AG04449 (cell line): ENCODE measurements at regions of chr10 and their contacts with region 1.

Region 1: GRCh38 chr10:117320050-117320665 is 55.1 kb downstream of the PDZD8 start:
- DNase-seq: no peak
- H3K4me3 ChIP-seq: no peak overlapping the region
- CTCF ChIP-seq: peak; percentile 40

Region 2: DNA sequence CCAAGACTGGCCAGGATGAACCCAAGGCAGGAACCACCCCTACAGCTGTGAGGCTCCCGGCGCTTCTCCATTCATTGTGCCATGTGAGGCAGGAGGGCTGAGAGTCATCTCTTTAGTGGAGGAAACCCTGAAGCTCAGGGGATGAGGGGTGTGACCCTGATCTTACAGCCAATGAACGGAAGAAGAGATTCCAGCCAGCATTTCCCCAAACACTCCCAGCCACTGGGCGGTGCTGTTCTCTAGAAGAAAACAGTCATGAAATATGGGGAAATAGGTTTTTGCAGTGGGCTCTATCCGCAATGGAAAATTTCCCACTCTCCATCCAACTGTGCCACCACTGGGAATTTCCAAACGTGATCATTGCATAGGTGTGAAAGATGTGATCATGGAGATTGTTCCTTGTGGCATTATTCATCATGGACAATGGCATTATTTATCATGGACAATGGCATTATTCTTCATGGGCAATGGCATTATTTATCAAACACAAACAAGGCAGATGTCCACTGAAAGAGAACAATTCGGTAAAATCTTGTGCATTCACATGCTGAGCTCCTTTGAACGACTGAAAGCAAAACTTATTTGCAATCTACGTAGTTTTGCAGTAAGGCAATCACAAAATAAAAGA is 93.2 kb before region 1 on chr10:
- CTCF ChIA-PET with region 1: interaction called, 267 read pairs
- POLR2A ChIA-PET with region 1: no interaction called
- DNase-seq: no peak
- H3K4me3 ChIP-seq: no peak overlapping the region
- CTCF ChIP-seq: peak; percentile 34

Region 3: GRCh38 chr10:117284716-117285494 is 35.3 kb before region 1 on chr10:
- CTCF ChIA-PET with region 1: interaction called, 10 read pairs
- POLR2A ChIA-PET with region 1: no interaction called
- DNase-seq: no peak
- H3K4me3 ChIP-seq: no peak overlapping the region
- CTCF ChIP-seq: no peak

Region 4: GRCh38 chr10:117300671-117301070 is 19.5 kb before region 1 on chr10:
- CTCF ChIA-PET with region 1: interaction called, 49 read pairs
- POLR2A ChIA-PET with region 1: no interaction called
- DNase-seq: no peak
- H3K4me3 ChIP-seq: no peak overlapping the region
- CTCF ChIP-seq: no peak

Region 5: GRCh38 chr10:117334066-117334465 is 13.9 kb after region 1 on chr10:
- CTCF ChIA-PET with region 1: interaction called, 28 read pairs
- POLR2A ChIA-PET with region 1: no interaction called
- DNase-seq: no peak
- H3K4me3 ChIP-seq: no peak overlapping the region
- CTCF ChIP-seq: no peak

Region 6: DNA sequence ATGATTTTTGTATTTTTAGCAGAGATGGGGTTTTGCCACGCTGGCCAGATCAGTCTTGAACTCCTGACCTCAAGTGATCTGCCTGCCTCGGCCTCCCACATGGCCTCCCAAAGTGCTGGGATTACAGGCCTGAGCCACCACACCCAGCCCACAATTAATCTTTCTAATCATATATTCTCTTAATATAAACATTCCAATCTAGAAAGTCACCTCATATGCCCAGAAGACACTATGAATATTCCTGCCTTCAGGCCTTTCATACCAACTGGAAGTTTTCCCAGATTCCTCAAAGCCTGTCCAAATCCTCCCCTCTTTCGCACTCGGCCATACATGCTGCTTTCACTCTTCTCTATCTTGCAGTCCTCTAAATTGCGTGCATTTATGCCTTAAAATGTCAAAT is 22.5 kb after region 1 on chr10:
- CTCF ChIA-PET with region 1: interaction called, 15 read pairs
- POLR2A ChIA-PET with region 1: no interaction called
- DNase-seq: peak; percentile 59
- H3K4me3 ChIP-seq: no peak overlapping the region
- CTCF ChIP-seq: no peak

Region 7: GRCh38 chr10:117554241-117554814 is 234.2 kb after region 1 on chr10:
- CTCF ChIA-PET with region 1: no interaction called
- POLR2A ChIA-PET with region 1: no interaction called
- DNase-seq: no peak
- H3K4me3 ChIP-seq: no peak overlapping the region
- CTCF ChIP-seq: no peak